ENCODE measurements at regions of chr1 and their contacts with region 1.

Region 1: GRCh38 chr1:223695941-223696340 is 16.4 kb upstream of the CAPN2 start:
- DNase-seq: no peak
- H3K4me3 ChIP-seq: no peak overlapping the region
- H3K27ac ChIP-seq: no peak overlapping the region
- H3K4me1 ChIP-seq: peaks cover 13 to 26% of the 10 kb centered on the region in 2 donors
- H3K27me3 ChIP-seq: no peaks in the 10 kb centered on the region
- CTCF ChIP-seq: no peak
- POLR2A ChIP-seq: no peak

Region 2: DNA sequence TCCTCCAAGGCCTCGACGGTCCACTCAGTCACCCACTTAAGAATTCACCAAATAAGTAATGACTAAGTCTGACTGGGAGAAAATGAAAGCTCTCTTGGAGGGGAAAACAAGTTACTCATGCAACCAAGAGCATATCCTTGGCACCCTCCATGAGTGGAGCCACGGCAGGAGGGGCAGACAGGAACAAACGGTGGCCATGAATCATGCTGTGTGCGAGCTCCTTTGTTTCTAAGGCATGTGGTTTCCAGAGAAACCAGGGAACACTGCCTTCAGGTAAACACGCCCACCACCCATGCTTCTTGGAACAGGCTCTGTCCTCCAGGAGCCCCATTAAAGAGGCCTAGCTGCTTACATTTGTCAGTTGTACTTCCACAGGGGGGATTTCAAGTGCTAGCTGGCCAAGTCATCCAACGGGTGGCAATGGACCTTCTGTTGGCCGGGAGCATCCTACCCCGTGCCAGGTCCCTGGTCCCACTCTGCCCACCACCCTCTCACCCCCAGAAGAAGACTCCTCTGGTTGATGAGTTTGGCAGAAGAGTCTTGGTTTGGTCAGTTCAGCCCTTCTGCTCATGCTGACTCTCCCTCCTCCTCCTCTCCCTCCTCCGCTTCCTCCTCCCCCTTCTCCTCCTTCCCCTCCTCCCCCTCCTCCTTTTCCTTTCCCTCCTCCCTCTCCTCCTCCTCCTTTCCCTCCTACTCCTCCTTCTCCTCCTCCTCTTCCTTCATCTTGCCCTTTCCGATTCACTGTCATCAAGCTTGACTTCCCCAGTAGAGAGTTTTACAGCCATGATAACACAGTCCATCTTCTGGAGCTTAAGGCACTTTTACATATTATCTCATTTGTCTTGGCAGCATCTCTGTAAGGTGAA is 195.1 kb before region 1 on chr1:
- intact Hi-C with region 1: no loop called
- DNase-seq: peak; percentile 77 to 78
- H3K4me3 ChIP-seq: no peak overlapping the region
- H3K27ac ChIP-seq: no peak overlapping the region
- H3K4me1 ChIP-seq: peaks cover 0 to 14% of the 10 kb centered on the region in 2 donors
- H3K27me3 ChIP-seq: no peaks in the 10 kb centered on the region
- CTCF ChIP-seq: no peak
- POLR2A ChIP-seq: no peak

Region 3: GRCh38 chr1:223515926-223516325 is 180.0 kb before region 1 on chr1:
- intact Hi-C with region 1: no loop called
- DNase-seq: no peak
- H3K4me3 ChIP-seq: no peak overlapping the region
- H3K27ac ChIP-seq: no peak overlapping the region
- H3K4me1 ChIP-seq: no peaks in the 10 kb centered on the region
- H3K27me3 ChIP-seq: no peaks in the 10 kb centered on the region
- CTCF ChIP-seq: no peak
- POLR2A ChIP-seq: no peak

Region 4: DNA sequence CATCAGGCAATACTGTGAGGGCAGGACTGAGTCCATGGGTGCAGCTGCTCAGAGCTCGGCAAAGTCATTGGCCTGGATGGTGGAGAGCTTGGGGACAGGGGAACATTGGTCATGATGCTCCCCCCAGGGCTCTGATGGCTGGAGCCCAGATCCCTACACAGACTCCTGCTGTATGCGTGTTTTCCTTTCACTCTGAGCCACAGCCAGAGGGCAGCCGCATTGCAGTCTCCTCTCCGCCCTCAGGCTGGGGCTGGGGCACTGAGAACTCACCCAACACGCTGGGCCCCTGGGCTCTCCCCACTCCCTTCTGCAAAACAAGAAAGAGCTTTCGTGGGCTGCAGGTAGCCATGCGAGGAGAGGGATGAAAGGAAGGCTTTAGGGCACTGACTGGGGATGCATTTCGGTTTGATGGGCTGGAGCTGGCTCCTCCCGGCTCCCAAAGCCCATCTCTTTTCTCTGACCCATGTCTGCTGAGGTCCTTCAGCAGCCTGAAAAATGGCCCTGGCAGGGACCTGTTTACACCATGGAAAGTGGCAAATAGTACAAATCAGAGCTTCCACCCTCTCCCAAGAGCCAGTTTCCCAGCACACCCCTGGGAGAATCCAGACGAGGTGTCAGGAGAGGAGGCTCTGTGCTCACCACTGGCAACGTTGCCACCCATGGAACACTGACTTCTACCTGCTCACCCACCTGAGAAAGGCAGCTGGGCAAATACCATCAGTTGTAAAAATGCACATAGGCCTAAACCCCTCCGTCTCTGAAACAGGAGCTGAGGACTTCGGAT is 60.2 kb after region 1 on chr1:
- intact Hi-C with region 1: loop called (anchors 10 kb)
- DNase-seq: no peak
- H3K4me3 ChIP-seq: no peak overlapping the region
- H3K27ac ChIP-seq: no peak overlapping the region
- H3K4me1 ChIP-seq: peaks cover 8 to 10% of the 10 kb centered on the region in 2 donors
- H3K27me3 ChIP-seq: no peaks in the 10 kb centered on the region
- CTCF ChIP-seq: no peak
- POLR2A ChIP-seq: no peak

Region 5: GRCh38 chr1:224014330-224014649 is 318.3 kb after region 1 on chr1:
- intact Hi-C with region 1: no loop called
- DNase-seq: no peak
- H3K4me3 ChIP-seq: no peak overlapping the region
- H3K27ac ChIP-seq: no peak overlapping the region
- H3K4me1 ChIP-seq: no peaks in the 10 kb centered on the region
- H3K27me3 ChIP-seq: no peaks in the 10 kb centered on the region
- CTCF ChIP-seq: no peak
- POLR2A ChIP-seq: no peak